ENCODE measurements at regions of chr13 and their contacts with region 1.

Region 1: DNA sequence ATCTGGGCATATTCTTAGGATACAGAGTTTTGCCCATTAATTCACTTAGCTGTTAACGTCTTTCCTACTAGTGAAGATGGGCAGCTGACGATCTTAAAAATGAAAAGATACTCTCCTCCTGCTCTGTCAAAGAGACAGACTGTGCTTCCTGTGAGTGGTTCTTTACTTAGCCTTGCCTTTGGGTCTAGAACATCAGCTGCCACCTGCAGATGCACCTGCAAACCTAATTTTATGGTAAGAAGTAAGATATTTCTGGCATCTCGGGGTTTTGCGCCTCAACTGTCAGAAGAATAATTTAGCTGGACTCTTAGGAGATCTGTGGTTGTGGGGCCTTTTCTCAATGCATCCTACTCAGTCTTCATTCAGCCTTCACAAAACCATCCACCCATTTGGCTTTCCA is 36.2 kb downstream of the TRPC4 start:
- DNase-seq: no peak
- ATAC-seq: no peak
- H3K4me3 ChIP-seq: no peak overlapping the region
- H3K27ac ChIP-seq: no peak overlapping the region
- H3K4me1 ChIP-seq: no peaks in the 10 kb centered on the region
- H3K27me3 ChIP-seq: no peaks in the 10 kb centered on the region
- CTCF ChIP-seq: no peak

Region 2: DNA sequence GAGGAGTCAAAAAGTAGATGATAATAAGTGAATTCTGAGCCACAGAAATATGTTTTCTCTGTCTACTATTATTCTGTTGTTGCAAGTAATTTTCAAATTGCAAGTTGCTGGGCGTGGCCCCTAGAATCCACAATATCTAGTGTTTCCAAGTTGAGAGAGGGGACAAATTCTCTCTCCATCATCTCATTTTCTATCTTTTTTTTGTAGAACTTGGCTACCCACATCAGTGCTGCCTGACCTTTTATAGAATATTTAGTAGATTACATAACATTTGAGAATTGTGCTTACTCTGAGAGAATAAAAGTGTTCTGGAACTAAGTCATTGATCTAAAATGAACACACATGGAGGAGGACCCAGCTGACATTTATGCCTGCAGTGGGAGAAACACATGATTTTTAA is 617.1 kb before region 1 on chr13:
- intact Hi-C with region 1: no loop called
- DNase-seq: no peak
- ATAC-seq: no peak
- H3K4me3 ChIP-seq: no peak overlapping the region
- H3K27ac ChIP-seq: no peak overlapping the region
- H3K4me1 ChIP-seq: no peaks in the 10 kb centered on the region
- H3K27me3 ChIP-seq: no peaks in the 10 kb centered on the region
- CTCF ChIP-seq: no peak

Region 3: GRCh38 chr13:37534181-37534580 is 299.2 kb before region 1 on chr13:
- intact Hi-C with region 1: loop called in 1 of 10 experiments (anchors 5 kb)
- DNase-seq: no peak
- ATAC-seq: no peak
- H3K4me3 ChIP-seq: no peak overlapping the region
- H3K27ac ChIP-seq: no peak overlapping the region
- H3K4me1 ChIP-seq: peaks cover 0 to 3% (median 0%) of the 10 kb centered on the region in 9 donors
- H3K27me3 ChIP-seq: no peaks in the 10 kb centered on the region
- CTCF ChIP-seq: no peak

Region 4: DNA sequence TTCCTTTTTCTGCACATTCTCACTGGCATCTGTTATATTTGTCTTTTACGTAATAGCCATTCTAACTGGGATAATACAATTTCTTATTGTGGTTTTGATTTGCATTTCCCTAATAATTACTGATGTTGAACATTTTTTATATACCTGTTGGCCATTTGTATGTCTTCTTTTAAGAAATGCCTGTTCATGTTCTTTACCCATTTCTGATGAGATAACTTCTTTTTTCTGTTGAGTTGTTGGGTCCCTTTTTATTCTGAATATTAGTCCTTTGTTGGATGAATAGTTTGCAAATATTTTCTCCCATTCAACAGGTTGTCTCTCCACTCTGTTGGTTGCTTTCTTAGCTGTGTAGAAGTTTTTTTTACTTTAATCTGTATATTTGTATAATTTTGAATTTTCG is 183.9 kb after region 1 on chr13:
- intact Hi-C with region 1: no loop called
- DNase-seq: no peak
- ATAC-seq: no peak
- H3K4me3 ChIP-seq: no peak overlapping the region
- H3K27ac ChIP-seq: no peak overlapping the region
- H3K4me1 ChIP-seq: no peaks in the 10 kb centered on the region
- H3K27me3 ChIP-seq: no peaks in the 10 kb centered on the region
- CTCF ChIP-seq: no peak

Measured in heart right ventricle (tissue), 16 donors.